ENCODE measurements at regions of chr9 and their contacts with region 1.

Region 1: GRCh38 chr9:17116400-17116837 is 18.4 kb upstream of the CNTLN start:
- DNase-seq: no peak
- ATAC-seq: no peak
- H3K4me3 ChIP-seq: no peak overlapping the region
- H3K27ac ChIP-seq: no peak overlapping the region
- H3K4me1 ChIP-seq: no peaks in the 10 kb centered on the region
- H3K27me3 ChIP-seq: no peaks in the 10 kb centered on the region

Region 2: DNA sequence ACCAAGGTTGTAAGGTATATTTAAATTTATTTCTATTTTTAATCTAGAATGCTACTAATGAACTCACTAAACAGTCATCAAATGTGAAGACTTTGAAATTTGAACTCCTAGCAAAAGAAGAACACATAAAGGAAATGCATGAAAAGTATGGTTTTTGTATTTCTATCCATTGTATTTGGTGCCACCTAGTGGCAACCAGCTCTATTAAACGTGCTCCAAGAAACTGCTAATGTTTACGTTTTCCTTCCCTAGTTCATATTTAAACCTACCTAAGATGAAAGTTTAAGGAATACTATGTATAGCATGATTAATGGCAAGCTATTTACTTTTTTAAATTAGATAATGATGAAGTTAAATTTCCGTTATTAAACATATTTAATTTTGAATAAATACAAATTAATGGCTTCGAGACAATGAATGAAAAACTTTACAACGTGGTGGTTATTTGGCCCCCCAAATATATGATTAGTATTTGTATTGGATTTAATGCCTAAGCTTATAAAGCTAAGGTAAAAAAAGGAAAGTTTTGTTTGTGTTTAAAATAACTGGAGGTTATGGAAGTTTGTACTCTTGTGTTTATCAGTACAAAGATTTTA is 346.5 kb after region 1 on chr9:
- intact Hi-C with region 1: loop called (anchors 5 to 10 kb)
- DNase-seq: no peak
- ATAC-seq: no peak
- H3K4me3 ChIP-seq: no peak overlapping the region
- H3K27ac ChIP-seq: no peak overlapping the region
- H3K4me1 ChIP-seq: no peaks in the 10 kb centered on the region
- H3K27me3 ChIP-seq: no peaks in the 10 kb centered on the region